AG04449 (cell line): ENCODE measurements at regions of chr17 and their contacts with region 1.

Region 1: GRCh38 chr17:21113716-21114115 is 13.0 kb upstream of the DHRS7B start:
- DNase-seq: no peak
- H3K4me3 ChIP-seq: no peak overlapping the region
- CTCF ChIP-seq: no peak

Region 2: GRCh38 chr17:21098934-21099689 is 14.6 kb before region 1 on chr17:
- CTCF ChIA-PET with region 1: interaction called, 27 read pairs
- POLR2A ChIA-PET with region 1: no interaction called
- DNase-seq: no peak
- H3K4me3 ChIP-seq: peak overlapping the region; percentile 72
- CTCF ChIP-seq: no peak

Region 3: DNA sequence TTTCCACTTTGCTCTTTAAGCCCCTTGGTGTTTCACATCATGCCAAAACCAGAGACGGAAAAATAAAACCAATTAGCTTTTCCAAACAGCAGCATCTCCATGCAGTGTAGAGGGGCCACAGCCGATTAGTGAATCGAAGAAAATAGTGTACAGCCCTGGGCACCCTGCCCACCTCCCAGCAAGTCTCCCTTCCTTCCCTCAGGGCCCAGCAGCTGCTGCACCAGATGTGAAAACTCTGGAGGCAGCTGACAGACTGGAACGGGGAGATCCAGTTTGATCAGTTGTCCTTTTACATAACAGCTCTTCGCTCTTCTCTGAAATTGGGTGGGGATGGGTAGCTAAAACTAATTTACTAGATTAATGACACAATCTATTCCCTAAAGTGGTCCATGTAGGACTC is 81.0 kb after region 1 on chr17:
- CTCF ChIA-PET with region 1: no interaction called
- POLR2A ChIA-PET with region 1: no interaction called
- DNase-seq: no peak
- H3K4me3 ChIP-seq: no peak overlapping the region
- CTCF ChIP-seq: no peak